ENCODE measurements at regions of chr12 and their contacts with region 1.

Region 1: DNA sequence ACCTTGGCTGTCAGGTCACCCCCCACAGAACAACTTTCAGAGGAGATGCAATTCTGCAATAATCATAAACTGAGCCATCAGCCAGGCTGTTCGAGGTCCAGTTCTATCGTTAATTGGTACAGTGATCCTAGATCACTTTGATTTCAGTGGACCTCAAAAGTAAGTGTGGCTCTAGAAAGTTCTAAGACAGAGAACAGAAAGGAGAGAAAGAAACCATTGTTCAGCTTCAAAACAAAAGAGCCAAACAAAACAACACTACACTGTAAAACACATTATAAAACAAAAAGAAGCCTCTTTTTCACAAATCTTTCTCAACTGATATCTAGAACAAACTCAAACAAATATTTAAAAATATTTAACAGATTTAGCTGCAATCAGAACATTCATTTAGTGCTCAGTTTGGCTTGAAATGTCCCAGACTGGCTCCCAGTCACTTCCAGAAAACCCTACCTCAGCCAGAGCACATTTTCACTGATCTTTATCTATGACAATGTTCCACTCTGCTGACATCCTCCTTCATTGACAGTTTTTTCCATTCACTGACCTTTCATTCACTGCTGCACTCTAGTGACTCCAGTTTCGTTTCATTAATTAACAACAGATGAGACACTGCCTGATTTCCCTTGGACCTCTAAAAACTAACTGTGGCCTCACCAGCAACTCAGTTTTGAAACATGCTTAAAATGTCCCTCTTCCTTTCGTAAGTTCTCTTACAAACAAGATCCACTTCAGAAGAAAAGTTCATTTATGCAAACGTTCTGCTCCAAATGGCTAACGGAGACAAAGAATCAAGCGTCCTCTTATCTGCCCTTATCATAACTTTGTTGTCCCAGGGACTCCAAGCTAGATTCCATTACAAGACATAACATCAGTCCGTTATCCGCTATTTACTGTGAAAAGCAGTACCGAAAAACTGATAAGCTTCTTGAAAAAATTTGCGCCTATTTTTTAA is 56.8 kb downstream of the DUSP16 start:
- DNase-seq: peak; percentile 94
- ATAC-seq: peak; percentile 87
- H3K4me3 ChIP-seq: peak overlapping the region; percentile 30
- H3K27ac ChIP-seq: peak overlapping the region; percentile 80
- H3K4me1 ChIP-seq: peaks cover 36% of the 10 kb centered on the region
- H3K27me3 ChIP-seq: no peaks in the 10 kb centered on the region
- CTCF ChIP-seq: no peak
- EP300 ChIP-seq: peak; percentile 92
- POLR2A ChIP-seq: no peak
- RAD21 ChIP-seq: peak; percentile 19; the same call in 1 of the 2 replicates

Region 2: DNA sequence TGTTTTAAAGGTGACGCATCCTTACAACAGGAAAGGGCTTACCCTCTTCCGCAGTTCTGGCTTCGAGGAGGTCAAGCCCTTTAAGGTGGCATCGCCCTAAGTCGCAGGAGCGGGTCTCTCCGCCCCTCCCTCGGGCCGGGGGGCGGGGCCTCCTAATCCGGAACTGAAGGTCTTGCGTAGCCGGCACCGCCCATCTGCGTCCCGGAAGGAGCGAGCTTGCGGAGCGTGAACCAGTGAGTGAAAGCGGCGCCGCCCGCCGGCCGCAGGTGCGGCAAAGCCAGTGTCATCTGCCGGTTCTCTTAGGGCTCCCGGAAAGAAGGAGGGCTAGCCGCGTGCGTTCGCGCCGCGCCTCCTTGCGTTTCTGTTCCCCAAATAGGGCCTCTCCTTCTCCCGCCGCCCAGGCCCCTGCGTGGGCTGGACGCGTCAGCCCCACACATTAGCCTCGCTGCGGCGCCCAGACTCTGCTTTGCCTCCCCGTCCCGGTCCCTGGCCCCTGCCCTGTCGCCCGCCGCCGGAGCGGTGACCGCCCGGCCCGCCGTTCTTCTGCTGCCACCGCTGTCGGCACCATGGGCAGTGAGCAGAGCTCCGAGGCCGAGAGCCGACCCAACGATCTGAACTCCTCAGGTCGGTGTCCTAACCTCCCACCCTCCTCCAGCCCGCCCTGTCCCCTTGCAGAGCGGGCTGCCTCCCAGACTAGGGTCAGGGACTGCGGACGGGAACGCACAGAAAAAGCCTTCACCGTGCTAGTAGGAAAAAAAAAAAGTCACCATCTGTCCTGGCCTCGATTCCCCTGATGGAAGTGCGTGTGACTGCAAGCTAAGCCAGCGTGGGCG is 148.7 kb before region 1 on chr12 and contains the start of gene BORCS5:
- CTCF ChIA-PET with region 1: interaction called, 5 read pairs
- POLR2A ChIA-PET with region 1: interaction called, 5 read pairs
- RAD21 ChIA-PET with region 1: interaction called, 29 read pairs
- SMC1A ChIA-PET with region 1: interaction called, 5 read pairs
- in situ Hi-C with region 1: no loop called
- intact Hi-C with region 1: no loop called
- DNase-seq: peak; percentile 94
- ATAC-seq: peak; percentile 92
- H3K4me3 ChIP-seq: peak within 1 kb of the TSS; percentile 71
- H3K27ac ChIP-seq: peak within 1 kb of the TSS; percentile 97
- H3K4me1 ChIP-seq: no peaks in the 10 kb centered on the region
- H3K27me3 ChIP-seq: no peaks in the 10 kb centered on the region
- CTCF ChIP-seq: peak; percentile 2 to 35 (median 24); a peak in 3 of 6 replicates
- EP300 ChIP-seq: peak in 1 of 2 experiments; percentile 59; a peak in 2 of 4 replicates
- POLR2A ChIP-seq: peak; percentile 96
- RAD21 ChIP-seq: no peak
- polyA plus RNA-seq, gene BORCS5: 1.4 to 1.7 TPM

Region 3: GRCh38 chr12:12384571-12385340 is 121.1 kb before region 1 on chr12:
- CTCF ChIA-PET with region 1: interaction called, 29 read pairs
- POLR2A ChIA-PET with region 1: interaction called, 5 read pairs
- RAD21 ChIA-PET with region 1: interaction called, 13 read pairs
- SMC1A ChIA-PET with region 1: interaction called, 18 read pairs
- in situ Hi-C with region 1: no loop called
- intact Hi-C with region 1: loop called (anchors 5 kb)
- DNase-seq: no peak
- ATAC-seq: peak; percentile 88
- H3K4me3 ChIP-seq: no peak overlapping the region
- H3K27ac ChIP-seq: no peak overlapping the region
- H3K4me1 ChIP-seq: peaks cover 7% of the 10 kb centered on the region
- H3K27me3 ChIP-seq: no peaks in the 10 kb centered on the region
- CTCF ChIP-seq: no peak
- EP300 ChIP-seq: 0 out of 4 replicates have a peak, but pooled peaks of 1 of the 2 experiments have one; percentile 11
- POLR2A ChIP-seq: no peak
- RAD21 ChIP-seq: no peak

Region 4: GRCh38 chr12:12486661-12487240 is 19.1 kb before region 1 on chr12:
- CTCF ChIA-PET with region 1: interaction called, 72 read pairs
- POLR2A ChIA-PET with region 1: interaction called, 51 read pairs
- RAD21 ChIA-PET with region 1: interaction called, 56 read pairs
- SMC1A ChIA-PET with region 1: interaction called, 98 read pairs
- in situ Hi-C with region 1: no loop called
- intact Hi-C with region 1: loop called (anchors 1 kb)
- DNase-seq: peak; percentile 57
- ATAC-seq: peak; percentile 93
- H3K4me3 ChIP-seq: no peak overlapping the region
- H3K27ac ChIP-seq: peak overlapping the region; percentile 58
- H3K4me1 ChIP-seq: peaks cover 19% of the 10 kb centered on the region
- H3K27me3 ChIP-seq: no peaks in the 10 kb centered on the region
- CTCF ChIP-seq: no peak
- EP300 ChIP-seq: peak; percentile 96 to 98
- POLR2A ChIP-seq: no peak
- RAD21 ChIP-seq: no peak

Region 5: GRCh38 chr12:12546314-12546772 is 40.5 kb after region 1 on chr12:
- CTCF ChIA-PET with region 1: interaction called, 5 read pairs
- POLR2A ChIA-PET with region 1: interaction called, 12 read pairs
- RAD21 ChIA-PET with region 1: interaction called, 12 read pairs
- SMC1A ChIA-PET with region 1: interaction called, 16 read pairs
- in situ Hi-C with region 1: no loop called
- intact Hi-C with region 1: no loop called
- DNase-seq: no peak
- ATAC-seq: peak; percentile 9; the same call in 1 of the 3 replicates
- H3K4me3 ChIP-seq: no peak overlapping the region
- H3K27ac ChIP-seq: no peak overlapping the region
- H3K4me1 ChIP-seq: peaks cover 10% of the 10 kb centered on the region; the same call in 1 of the 2 replicates
- H3K27me3 ChIP-seq: no peaks in the 10 kb centered on the region
- CTCF ChIP-seq: no peak
- EP300 ChIP-seq: no peak
- POLR2A ChIP-seq: no peak
- RAD21 ChIP-seq: no peak

Region 6: DNA sequence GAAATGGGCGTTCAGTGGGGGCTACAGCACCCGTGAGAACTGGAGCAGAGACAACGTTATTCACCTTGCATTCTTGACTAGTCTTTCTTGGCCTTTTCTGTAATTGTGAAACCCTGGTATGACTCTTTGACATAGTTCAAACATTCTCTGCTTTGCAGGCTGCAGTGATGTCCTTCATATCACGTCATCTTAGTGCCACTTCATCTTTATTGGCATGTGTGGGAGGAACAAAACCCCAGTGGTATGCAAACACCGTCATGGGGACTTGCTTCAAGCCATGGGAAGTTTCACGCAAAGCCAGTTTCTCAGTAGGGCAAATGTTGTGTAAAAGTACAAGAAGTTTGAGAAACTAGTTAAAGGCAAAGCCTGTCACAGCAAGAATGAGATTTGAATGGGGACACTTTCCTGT is 77.1 kb after region 1 on chr12:
- CTCF ChIA-PET with region 1: interaction called, 4 read pairs
- POLR2A ChIA-PET with region 1: interaction called, 3 read pairs
- RAD21 ChIA-PET with region 1: interaction called, 7 read pairs
- SMC1A ChIA-PET with region 1: interaction called, 21 read pairs
- in situ Hi-C with region 1: no loop called
- intact Hi-C with region 1: loop called (anchors 1 kb)
- DNase-seq: peak; percentile 100
- ATAC-seq: peak; percentile 92
- H3K4me3 ChIP-seq: no peak overlapping the region
- H3K27ac ChIP-seq: peak overlapping the region; percentile 94
- H3K4me1 ChIP-seq: peaks cover 44% of the 10 kb centered on the region
- H3K27me3 ChIP-seq: no peaks in the 10 kb centered on the region
- CTCF ChIP-seq: no peak
- EP300 ChIP-seq: peak; percentile 96 to 99
- POLR2A ChIP-seq: peak; percentile 36; the same call in 1 of the 2 replicates
- RAD21 ChIP-seq: 0 out of 2 replicates have a peak, but pooled peaks have one; percentile 17